GM23248 (cell line): ENCODE measurements at regions of chr3 and their contacts with region 1.

Region 1: DNA sequence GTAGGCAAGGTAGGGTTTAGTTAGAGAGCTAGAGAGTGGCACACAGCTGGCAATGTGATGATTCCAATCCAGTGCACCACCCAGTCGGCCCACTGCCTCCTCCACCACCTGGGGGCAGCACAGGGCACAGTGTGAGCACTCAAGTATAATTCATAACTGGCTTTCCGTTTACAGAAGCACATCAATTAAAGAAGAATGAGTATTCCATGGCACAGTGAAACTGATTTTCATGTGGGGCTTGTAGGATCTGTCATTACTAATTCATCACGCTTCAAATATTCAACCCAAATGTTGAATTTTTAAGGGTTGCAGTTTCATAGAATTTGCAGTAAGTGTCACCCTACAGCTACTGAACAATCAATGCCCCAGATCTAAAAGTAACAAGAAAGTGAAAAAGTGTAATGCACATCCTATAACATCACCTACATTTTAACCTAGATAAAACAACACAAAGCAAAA is 149.9 kb downstream of the IGSF11 start:
- DNase-seq: peak; percentile 72
- H3K4me3 ChIP-seq: no peak overlapping the region
- H3K27ac ChIP-seq: no peak overlapping the region
- H3K4me1 ChIP-seq: no peaks in the 10 kb centered on the region
- H3K27me3 ChIP-seq: peaks cover 17% of the 10 kb centered on the region; the same call in 1 of the 2 replicates

Region 2: DNA sequence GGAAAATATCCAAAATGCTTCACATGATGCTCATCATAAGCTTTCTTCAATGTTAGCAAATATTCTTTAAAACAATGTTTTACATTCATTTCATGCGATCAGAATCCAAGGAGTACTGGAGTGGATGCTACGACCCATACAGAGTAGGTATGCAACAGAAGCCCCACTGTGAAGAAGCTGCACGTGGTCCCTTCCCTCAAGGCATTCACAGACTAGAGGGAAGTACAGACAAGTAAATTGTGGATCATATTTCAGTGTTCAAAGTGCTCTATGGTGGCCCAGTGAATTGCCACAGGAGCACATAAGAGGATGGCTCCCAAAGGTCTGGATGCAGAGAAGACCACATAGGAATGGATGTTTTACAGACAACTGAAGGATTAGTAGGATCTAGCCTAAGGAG is 640.0 kb before region 1 on chr3:
- in situ Hi-C with region 1: no loop called
- DNase-seq: no peak
- H3K4me3 ChIP-seq: no peak overlapping the region
- H3K27ac ChIP-seq: no peak overlapping the region
- H3K4me1 ChIP-seq: no peaks in the 10 kb centered on the region
- H3K27me3 ChIP-seq: no peaks in the 10 kb centered on the region

Region 3: GRCh38 chr3:118480101-118480860 is 404.5 kb before region 1 on chr3:
- in situ Hi-C with region 1: no loop called
- DNase-seq: no peak
- H3K4me3 ChIP-seq: no peak overlapping the region
- H3K27ac ChIP-seq: no peak overlapping the region
- H3K4me1 ChIP-seq: no peaks in the 10 kb centered on the region
- H3K27me3 ChIP-seq: no peaks in the 10 kb centered on the region

Region 4: DNA sequence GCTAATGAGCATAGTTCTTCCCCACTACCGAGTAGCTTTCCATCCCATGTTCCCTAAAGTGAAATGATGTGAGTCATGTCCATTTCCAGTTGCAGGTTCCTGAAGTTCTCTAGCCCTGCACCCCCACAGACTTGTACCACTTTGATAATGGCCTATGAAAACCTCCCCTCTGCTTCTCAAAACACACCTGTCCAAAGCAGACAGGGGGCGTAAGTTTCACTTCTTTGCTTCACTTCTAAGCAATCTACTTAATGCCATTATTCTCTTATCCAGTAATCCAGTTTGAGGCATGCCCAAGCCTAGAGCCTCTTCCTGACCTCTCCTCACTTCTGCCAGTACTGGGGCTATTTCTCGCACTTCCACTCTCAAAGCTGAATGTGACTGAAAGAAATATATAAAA is 155.2 kb before region 1 on chr3:
- in situ Hi-C with region 1: no loop called
- DNase-seq: no peak
- H3K4me3 ChIP-seq: no peak overlapping the region
- H3K27ac ChIP-seq: no peak overlapping the region
- H3K4me1 ChIP-seq: no peaks in the 10 kb centered on the region
- H3K27me3 ChIP-seq: no peaks in the 10 kb centered on the region

Region 5: DNA sequence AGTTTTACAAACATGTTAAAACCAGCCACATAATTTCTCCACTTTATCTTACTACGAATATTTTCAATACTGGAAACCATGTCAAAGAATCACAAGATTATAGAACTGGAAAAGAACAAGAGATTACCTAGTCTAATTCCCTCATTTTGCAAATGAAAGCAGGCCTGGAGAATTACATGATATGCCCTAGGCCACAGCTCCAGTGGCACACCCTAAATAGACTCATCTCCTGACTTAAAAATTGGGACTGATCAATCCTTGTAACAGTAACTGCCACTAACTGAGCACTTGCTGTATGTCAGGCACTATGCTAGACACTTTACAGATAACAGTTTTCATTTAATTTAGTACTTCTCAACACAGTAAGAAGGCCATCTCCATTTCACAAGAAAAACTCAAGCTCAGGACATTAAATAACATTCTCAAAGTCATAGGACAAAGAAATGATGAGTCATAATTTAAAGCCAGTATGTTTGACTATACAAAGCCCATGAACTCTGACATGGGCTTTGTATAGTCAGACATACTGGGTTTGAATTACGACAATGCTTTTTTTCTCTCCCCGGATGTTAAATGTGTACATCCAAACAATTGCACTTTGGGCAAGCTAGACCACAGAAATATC is 140.5 kb after region 1 on chr3:
- in situ Hi-C with region 1: no loop called
- DNase-seq: no peak
- H3K4me3 ChIP-seq: no peak overlapping the region
- H3K27ac ChIP-seq: no peak overlapping the region
- H3K4me1 ChIP-seq: no peaks in the 10 kb centered on the region
- H3K27me3 ChIP-seq: no peaks in the 10 kb centered on the region; the same call in 1 of the 2 replicates

Region 6: DNA sequence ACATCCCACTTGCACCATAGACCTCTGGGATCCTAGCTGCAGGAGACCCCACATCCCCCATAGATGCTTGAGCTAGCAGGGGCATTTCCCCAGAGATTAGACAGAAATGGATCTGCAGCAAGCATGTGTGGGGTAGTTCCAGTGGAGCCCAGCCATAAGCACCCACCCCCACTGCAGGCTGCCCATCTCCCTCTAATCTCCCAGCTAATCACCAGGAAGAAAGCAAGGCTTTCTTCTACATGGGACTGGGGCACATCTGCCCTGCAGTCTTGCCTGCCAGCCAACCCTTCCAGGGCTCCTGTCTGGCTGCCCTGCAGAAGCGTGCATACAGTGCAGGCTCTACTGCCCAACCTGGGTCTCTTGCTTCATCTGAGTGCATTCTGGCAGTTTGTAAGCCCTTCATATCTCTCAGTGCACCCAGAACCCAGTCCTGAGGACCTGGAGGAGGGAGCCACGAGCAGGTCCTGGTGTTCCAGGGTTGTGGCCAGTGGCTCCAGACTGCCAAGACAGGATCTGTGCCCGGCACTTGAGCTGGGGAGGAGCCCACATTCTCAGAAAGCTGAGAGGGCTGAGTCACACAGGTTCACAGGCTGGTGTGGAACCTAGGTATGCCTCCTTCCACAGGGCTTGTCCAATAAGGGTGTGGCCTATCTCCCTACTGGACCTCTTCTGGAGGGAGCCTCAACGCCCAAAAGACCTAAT is 199.7 kb after region 1 on chr3:
- in situ Hi-C with region 1: loop called (anchors 10 kb)
- DNase-seq: no peak
- H3K4me3 ChIP-seq: no peak overlapping the region
- H3K27ac ChIP-seq: no peak overlapping the region
- H3K4me1 ChIP-seq: no peaks in the 10 kb centered on the region
- H3K27me3 ChIP-seq: no peaks in the 10 kb centered on the region; the same call in 1 of the 2 replicates

Region 7: GRCh38 chr3:119240591-119241434 is 356.0 kb after region 1 on chr3 and contains the start of gene B4GALT4:
- in situ Hi-C with region 1: loop called (anchors 5 kb)
- DNase-seq: peak; percentile 98
- H3K4me3 ChIP-seq: peak within 1 kb of the TSS; percentile 81
- H3K27ac ChIP-seq: peak within 1 kb of the TSS; percentile 77
- H3K4me1 ChIP-seq: peaks cover 36% of the 10 kb centered on the region
- H3K27me3 ChIP-seq: no peaks in the 10 kb centered on the region
- total RNA-seq, gene B4GALT4: 55.6 and 56.0 TPM in 2 replicates

Region 8: DNA sequence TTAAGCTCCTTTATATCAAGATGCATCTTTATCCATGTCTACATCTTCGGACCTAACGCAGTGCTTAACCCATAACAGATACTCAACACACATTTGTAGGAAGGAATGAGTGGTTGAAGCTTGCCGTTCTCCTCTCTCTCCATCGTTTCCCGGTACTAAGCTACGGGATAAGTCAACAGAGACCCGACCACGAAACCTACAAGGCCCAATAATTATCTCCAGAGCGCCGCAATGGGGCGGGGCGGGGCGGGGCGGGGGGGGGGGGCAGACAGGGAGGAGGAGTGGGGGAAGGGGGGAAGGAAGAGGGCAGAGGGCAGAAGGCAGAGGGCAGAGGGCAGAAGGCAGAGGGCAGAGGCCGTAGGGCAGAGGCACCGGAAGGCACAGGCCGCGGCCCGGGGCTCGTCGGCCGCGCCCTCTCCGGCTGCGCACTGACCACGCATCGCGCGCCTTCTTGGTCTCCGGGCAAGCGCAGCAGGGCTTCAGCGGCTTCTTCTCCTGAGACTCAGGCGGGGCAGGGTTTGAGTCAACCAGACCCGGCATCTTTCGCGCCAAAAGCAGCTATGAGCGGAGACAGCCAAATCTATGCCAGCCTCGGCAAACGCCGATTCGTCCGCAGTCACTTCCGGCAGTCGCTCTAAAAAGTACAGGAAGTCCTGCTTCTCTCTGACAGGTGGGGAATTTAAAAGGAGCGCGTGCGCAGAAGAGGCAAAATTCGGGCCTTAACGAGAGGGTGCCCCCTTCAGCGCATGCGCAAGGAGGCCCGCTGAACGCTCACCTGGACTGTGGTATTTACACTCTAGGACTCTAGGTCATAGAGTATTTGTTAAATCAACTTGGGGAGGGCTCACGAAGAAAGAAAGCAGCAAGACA is 792.2 kb after region 1 on chr3 and contains the start of gene COX17:
- in situ Hi-C with region 1: loop called (anchors 25 kb)
- DNase-seq: peak; percentile 96
- H3K4me3 ChIP-seq: peak within 1 kb of the TSS; percentile 80
- H3K27ac ChIP-seq: peak within 1 kb of the TSS; percentile 37
- H3K4me1 ChIP-seq: peaks cover 14% of the 10 kb centered on the region
- H3K27me3 ChIP-seq: no peaks in the 10 kb centered on the region
- total RNA-seq, gene COX17: 7.0 and 27.7 TPM in 2 replicates